Heart right ventricle (tissue), 16 donors: ENCODE measurements at regions of chr10 and their contacts with region 1.

Region 1: DNA sequence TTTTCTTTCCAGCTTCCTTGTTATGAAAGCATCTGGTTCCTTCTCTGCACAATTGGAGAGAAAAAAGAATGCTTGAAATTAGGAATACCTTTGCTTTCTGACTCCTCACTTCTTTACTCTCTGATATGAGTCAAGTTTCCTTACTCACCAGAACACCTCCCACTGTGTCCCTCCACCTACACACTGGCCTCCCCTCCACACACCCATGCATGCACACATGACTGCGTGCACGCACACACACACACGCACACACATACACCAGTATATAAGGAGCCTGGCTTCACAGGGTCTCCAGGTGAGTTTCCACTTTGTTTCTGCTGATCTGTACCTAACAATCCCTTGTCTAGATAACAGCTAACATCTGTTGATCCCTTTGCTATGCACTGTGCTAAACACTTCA is 11.4 kb upstream of the PTER start:
- DNase-seq: no peak
- ATAC-seq: no peak
- H3K4me3 ChIP-seq: no peak overlapping the region
- H3K27ac ChIP-seq: no peak overlapping the region
- H3K4me1 ChIP-seq: no peaks in the 10 kb centered on the region
- H3K27me3 ChIP-seq: peaks cover 0 to 12% (median 4%) of the 10 kb centered on the region in 7 donors
- CTCF ChIP-seq: no peak

Region 2: DNA sequence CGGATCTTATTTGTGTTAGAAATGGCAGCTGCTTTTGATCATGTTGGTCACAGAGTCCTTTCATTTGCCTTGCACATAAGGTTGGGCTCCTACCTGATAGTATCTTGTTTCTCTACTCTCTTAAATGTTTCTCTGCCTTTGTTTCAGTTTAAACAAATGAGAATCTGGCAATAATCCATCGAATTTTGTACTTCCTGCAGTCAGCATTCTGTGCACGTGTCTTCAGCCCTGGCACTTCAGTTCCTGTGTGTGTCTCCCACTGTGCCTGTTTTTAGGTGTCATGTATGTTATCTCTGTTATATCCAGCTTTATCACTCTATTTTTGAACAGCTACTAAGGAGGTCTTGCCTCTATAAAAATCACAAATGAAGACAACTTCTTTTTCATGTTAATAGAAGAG is 17.1 kb before region 1 on chr10:
- intact Hi-C with region 1: no loop called
- DNase-seq: no peak
- ATAC-seq: no peak
- H3K4me3 ChIP-seq: no peak overlapping the region
- H3K27ac ChIP-seq: no peak overlapping the region
- H3K4me1 ChIP-seq: no peaks in the 10 kb centered on the region
- H3K27me3 ChIP-seq: peaks cover 0 to 10% (median 4%) of the 10 kb centered on the region in 7 donors
- CTCF ChIP-seq: no peak

Region 3: GRCh38 chr10:16497911-16498310 is 72.5 kb after region 1 on chr10:
- intact Hi-C with region 1: loop called in 1 of 10 experiments (anchors 2 kb)
- DNase-seq: no peak
- ATAC-seq: no peak
- H3K4me3 ChIP-seq: no peak overlapping the region
- H3K27ac ChIP-seq: no peak overlapping the region
- H3K4me1 ChIP-seq: no peaks in the 10 kb centered on the region
- H3K27me3 ChIP-seq: no peaks in the 10 kb centered on the region
- CTCF ChIP-seq: no peak

Region 4: DNA sequence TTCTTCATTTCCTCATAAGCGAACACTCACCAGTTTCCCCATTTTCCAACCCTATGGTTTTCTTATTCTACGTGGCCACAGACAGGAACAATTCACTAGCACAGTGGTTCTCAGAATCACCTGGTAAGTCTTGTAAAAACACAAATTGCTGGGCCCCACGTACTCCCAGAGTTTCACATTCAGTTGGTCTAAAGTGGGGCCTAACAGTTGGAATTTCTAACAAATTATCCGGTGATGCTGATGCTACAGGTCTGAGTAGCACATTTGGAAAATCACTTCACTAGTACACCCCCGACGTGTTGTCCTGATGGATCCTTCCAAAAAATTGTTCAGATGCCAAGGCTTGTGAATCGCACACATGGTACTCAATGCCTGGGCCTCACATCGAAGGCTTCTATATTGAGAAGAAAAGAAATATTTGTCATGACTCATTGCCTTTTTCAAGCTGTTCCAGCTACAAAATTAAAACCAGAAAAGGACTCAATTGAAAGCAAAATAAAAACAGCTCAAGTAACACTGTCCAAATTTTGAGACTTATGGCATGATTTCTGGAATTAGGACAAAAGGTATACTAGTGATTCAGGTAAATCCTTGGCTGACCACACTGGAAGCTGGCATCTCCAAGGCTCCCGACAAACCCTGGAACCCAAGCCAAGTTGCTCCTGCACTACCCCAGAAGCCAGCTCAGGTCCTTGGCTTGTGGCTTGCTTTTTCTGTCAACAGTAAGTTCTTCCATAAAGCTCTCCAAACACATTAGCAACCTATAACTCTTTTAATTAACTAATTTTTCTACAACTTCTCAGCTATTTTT is 789.7 kb after region 1 on chr10:
- intact Hi-C with region 1: loop called in 1 of 10 experiments (anchors 5 kb)
- DNase-seq: no peak
- ATAC-seq: no peak
- H3K4me3 ChIP-seq: no peak overlapping the region
- H3K27ac ChIP-seq: peak overlapping the region in 6 of 10 donors; percentile 61 to 93 (median 74)
- H3K4me1 ChIP-seq: peaks cover 0 to 62% (median 4%) of the 10 kb centered on the region in 9 donors
- H3K27me3 ChIP-seq: no peaks in the 10 kb centered on the region
- CTCF ChIP-seq: no peak